Activated CD4-positive, alpha-beta memory T cell treated with anti-CD3 and anti-CD28 coated beads for 36 hours (primary cell): ENCODE measurements at regions of chr9 and their contacts with region 1.

Region 1: DNA sequence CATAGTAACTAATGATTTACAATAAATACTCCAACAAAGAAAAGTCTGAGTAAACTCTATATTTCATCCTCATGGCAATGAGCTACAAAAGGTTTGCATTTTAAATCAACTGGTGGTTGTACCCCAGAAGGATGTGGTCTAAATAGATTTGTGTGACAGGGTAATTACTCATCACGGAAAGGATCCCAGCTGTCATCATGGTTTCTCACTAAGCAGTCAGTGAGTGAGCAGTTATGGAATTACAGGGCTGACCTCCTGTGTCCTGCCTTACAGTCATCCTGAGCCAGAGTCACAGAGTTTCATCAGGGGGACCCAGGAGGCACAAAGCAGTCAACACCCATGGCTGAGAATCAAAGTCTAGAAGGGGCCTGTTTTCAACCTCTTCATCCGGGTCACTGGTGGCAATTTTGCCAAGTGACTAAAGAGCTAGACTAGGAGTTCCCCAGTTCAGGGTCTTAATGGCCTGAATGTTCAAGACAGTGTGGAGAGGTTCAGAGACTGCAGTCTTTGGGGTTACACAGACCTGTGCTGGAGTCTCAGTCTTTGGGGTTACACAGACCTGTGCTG is 210.7 kb upstream of the SLC24A2 start:
- DNase-seq: peak; percentile 85
- H3K4me3 Mint-ChIP-seq: no peak overlapping the region
- H3K27ac Mint-ChIP-seq: peak overlapping the region; percentile 88
- H3K4me1 Mint-ChIP-seq: peaks cover 49% of the 10 kb centered on the region
- H3K27me3 Mint-ChIP-seq: peaks cover 1% of the 10 kb centered on the region

Region 2: GRCh38 chr9:19048966-19049916 is 950.3 kb before region 1 on chr9 and contains the start of gene RRAGA:
- CTCF ChIA-PET with region 1: no interaction called
- POLR2A ChIA-PET with region 1: no interaction called
- intact Hi-C with region 1: loop called (anchors 10 kb)
- DNase-seq: peak; percentile 96
- H3K4me3 Mint-ChIP-seq: peak within 1 kb of the TSS; percentile 93
- H3K27ac Mint-ChIP-seq: peak within 1 kb of the TSS; percentile 98
- H3K4me1 Mint-ChIP-seq: peaks cover 37% of the 10 kb centered on the region
- H3K27me3 Mint-ChIP-seq: no peaks in the 10 kb centered on the region
- total RNA-seq, gene RRAGA: 43.8 to 45.5 TPM

Region 3: GRCh38 chr9:19976226-19976625 is 23.3 kb before region 1 on chr9:
- CTCF ChIA-PET with region 1: no interaction called
- POLR2A ChIA-PET with region 1: interaction called, 4 read pairs
- intact Hi-C with region 1: loop called (anchors 1 kb)
- DNase-seq: peak; percentile 45
- H3K4me3 Mint-ChIP-seq: no peak overlapping the region
- H3K27ac Mint-ChIP-seq: peak overlapping the region; percentile 74
- H3K4me1 Mint-ChIP-seq: peaks cover 23% of the 10 kb centered on the region
- H3K27me3 Mint-ChIP-seq: no peaks in the 10 kb centered on the region

Region 4: GRCh38 chr9:20209391-20210340 is 210.1 kb after region 1 on chr9:
- CTCF ChIA-PET with region 1: interaction called, 12 read pairs
- POLR2A ChIA-PET with region 1: interaction called, 25 read pairs
- intact Hi-C with region 1: loop called (anchors 1 kb)
- DNase-seq: peak; percentile 79
- H3K4me3 Mint-ChIP-seq: no peak overlapping the region
- H3K27ac Mint-ChIP-seq: peak overlapping the region; percentile 89
- H3K4me1 Mint-ChIP-seq: peaks cover 33% of the 10 kb centered on the region
- H3K27me3 Mint-ChIP-seq: no peaks in the 10 kb centered on the region

Region 5: DNA sequence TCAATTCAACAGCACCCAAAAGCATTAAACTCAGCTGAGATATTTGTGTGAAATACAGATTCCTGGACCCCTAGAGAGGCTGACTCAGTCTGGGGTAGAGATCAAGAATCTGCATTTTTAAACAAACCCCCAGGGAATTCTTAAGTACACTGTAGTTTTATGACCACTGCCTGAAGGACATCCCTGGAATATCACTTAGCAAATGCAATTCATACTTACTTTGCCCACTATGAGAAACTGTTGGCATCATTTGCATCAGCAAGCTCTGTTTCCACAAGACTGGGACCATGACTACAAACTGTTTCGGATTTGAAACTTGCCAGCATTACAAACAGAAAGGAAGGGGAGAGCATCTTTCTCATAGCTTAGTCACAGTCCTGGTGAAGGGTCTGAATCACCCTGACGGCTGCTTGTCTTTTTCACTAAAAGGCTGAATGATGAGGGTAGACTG is 559.0 kb after region 1 on chr9:
- CTCF ChIA-PET with region 1: no interaction called
- POLR2A ChIA-PET with region 1: no interaction called
- intact Hi-C with region 1: loop called (anchors 2 kb)
- DNase-seq: peak; percentile 60
- H3K4me3 Mint-ChIP-seq: no peak overlapping the region
- H3K27ac Mint-ChIP-seq: peak overlapping the region; percentile 65
- H3K4me1 Mint-ChIP-seq: peaks cover 86% of the 10 kb centered on the region
- H3K27me3 Mint-ChIP-seq: no peaks in the 10 kb centered on the region

Region 6: DNA sequence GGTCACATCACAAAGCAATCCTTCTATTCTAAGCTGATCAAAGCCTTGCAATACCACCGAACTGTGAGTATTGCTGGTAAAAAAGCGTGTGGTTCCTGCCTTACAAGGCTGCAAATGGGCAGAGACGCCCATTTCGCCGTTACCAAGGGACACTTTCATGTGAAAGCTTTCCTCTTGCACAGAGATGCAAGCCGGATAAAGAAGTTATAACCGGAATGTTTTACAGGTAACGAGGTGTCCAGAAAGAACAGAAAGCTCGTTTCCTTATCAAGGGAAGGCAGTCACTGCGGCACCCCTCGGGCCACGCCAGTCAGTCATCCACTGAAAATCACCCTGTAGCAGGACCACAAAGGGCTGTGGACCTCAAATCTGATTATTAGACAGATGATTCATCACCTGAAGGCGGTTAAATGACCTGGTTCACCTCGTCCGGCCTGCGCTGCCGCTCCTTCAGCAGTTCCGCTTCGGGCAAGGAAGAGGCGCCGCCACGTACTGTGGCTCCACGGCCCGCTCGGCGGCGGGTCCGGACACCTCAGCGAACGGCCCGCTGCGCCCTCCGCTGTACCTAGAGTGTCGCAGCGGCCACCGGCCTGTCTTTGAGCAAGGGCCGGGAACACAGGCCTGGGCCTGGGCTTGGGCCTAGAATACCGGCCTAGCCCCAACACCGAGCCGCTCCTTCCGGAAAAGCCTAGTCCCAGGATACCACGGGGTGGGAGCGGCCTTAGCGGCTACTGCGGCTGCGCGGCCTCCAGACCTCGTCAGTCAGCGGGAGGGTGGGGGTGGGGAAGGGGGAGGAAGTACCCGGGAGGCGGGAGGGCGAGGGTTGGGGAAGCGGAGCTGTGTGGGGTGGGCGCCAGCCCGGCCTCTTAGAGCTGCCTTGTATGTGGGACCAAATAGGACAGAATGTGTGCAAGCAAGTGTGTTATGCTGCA is 1335.4 kb after region 1 on chr9 and contains the start of gene KLHL9:
- CTCF ChIA-PET with region 1: no interaction called
- POLR2A ChIA-PET with region 1: no interaction called
- intact Hi-C with region 1: loop called (anchors 10 kb)
- DNase-seq: peak; percentile 92
- H3K4me3 Mint-ChIP-seq: peak within 1 kb of the TSS; percentile 86
- H3K27ac Mint-ChIP-seq: peak within 1 kb of the TSS; percentile 87
- H3K4me1 Mint-ChIP-seq: peaks cover 50% of the 10 kb centered on the region
- H3K27me3 Mint-ChIP-seq: no peaks in the 10 kb centered on the region
- total RNA-seq, gene KLHL9: 15.9 to 16.0 TPM